GM10248 (cell line): ENCODE measurements at regions of chr3 and their contacts with region 1.

Region 1: GRCh38 chr3:42071904-42072592 is 19.1 kb upstream of the TRAK1 start:
- DNase-seq: peak; percentile 39
- CTCF ChIP-seq: no peak

Region 2: GRCh38 chr3:42052484-42053351 is 19.3 kb before region 1 on chr3:
- CTCF ChIA-PET with region 1: interaction called, 10 read pairs
- POLR2A ChIA-PET with region 1: interaction called, 4 read pairs
- DNase-seq: no peak
- CTCF ChIP-seq: no peak